Cardiac septum (tissue), 1 donor: ENCODE measurements at regions of chr1 and their contacts with region 1.

Region 1: DNA sequence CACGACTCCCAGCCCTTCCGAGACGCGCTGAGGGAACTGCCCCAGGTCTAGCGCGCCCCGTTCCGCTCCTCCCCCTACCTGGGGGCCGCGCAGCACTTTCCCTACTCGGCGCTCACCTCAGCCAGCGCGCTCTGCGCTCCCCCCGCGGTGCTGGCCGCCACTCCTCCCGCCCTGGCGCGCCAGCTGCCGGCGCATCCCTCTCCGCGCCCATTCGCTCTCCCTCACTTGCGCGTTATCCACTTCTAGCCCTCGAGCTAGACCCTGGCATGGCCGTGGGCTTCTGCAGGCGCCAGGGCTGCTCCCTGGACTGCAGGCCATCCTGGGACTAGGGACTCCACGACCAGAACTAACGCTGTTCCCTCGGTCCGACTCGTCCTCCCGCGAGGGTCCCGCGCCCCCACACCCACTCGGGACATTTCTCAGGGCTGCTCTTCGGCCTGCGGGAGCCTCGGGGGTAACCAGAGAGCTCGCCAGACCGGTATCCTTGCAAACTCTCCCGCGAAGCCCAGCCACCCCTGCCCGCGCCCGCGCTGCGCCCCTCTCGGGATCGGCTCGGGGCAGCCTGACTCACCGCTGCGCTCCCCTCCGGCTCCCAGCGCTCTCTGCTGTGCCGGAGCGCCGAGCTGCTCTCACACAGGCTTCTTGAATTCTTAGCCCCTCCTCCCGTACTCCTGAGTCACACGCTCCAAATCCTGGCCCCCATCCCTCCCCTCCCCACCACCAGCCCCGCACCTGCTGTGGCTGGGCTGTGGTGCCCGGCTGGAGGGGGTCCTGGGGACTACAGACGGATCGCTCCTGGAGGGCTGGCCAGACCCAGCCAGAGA is at the start of gene NGF:
- DNase-seq: no peak
- total RNA-seq, gene NGF: 2.1 TPM

Region 2: GRCh38 chr1:115426231-115426771 is 88.5 kb after region 1 on chr1:
- intact Hi-C with region 1: loop called (anchors 5 kb)
- DNase-seq: peak; percentile 78

Region 3: DNA sequence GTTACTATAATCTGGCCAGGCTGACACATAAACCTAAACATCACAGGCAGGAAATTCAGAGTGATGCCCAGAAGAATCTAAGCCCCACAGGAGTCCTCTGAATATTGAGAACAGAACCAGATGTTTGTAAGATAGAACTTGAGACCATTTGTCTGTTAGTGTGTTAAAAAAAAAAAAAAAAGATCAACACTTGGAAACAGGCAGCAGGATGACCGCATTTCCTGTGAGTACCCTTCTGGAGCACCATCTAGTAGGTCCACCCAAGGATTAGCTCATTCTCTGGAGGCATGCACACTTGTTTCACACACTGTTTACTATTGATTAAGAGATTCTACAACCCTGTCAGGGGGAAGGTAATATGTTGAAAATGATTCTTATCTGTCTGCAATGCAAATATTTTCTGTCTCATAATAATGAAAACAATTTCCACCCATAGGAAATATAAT is 192.6 kb after region 1 on chr1:
- intact Hi-C with region 1: no loop called
- DNase-seq: no peak